T-cell (primary cell): ENCODE measurements at regions of chr7 and their contacts with region 1.

Region 1: GRCh38 chr7:6283391-6284390 is 11.3 kb upstream of the CYTH3 start:
- DNase-seq: no peak
- ATAC-seq: no peak
- H3K4me3 ChIP-seq: no peak overlapping the region
- H3K4me3 Mint-ChIP-seq: no peak overlapping the region
- H3K27ac ChIP-seq: no peak overlapping the region
- H3K27ac Mint-ChIP-seq: peak overlapping the region in 1 of 2 donors; percentile 8
- H3K4me1 ChIP-seq: peaks cover 0 to 2% of the 10 kb centered on the region in 2 experiments
- H3K4me1 Mint-ChIP-seq: peaks cover 0 to 5% (median 0%) of the 10 kb centered on the region in 3 donors
- H3K27me3 ChIP-seq: no peaks in the 10 kb centered on the region
- H3K27me3 Mint-ChIP-seq: no peaks in the 10 kb centered on the region

Region 2: GRCh38 chr7:5117095-5117970 is 1166.4 kb before region 1 on chr7:
- CTCF ChIA-PET with region 1: no interaction called
- POLR2A ChIA-PET with region 1: interaction called in 1 of 2 experiments, 10 read pairs
- DNase-seq: no peak
- ATAC-seq: no peak
- H3K4me3 ChIP-seq: no peak overlapping the region
- H3K4me3 Mint-ChIP-seq: no peak overlapping the region
- H3K27ac ChIP-seq: no peak overlapping the region
- H3K27ac Mint-ChIP-seq: no peak overlapping the region
- H3K4me1 ChIP-seq: no peaks in the 10 kb centered on the region
- H3K4me1 Mint-ChIP-seq: peaks cover 0 to 7% (median under 1%) of the 10 kb centered on the region in 3 donors
- H3K27me3 ChIP-seq: peaks cover 0 to 6% of the 10 kb centered on the region in 2 experiments
- H3K27me3 Mint-ChIP-seq: peaks cover 0 to 19% of the 10 kb centered on the region in 2 donors